Activated T-helper 2 cell treated with anti-CD3 and anti-CD28 coated beads, Interferon-gamma antibody, Interleukin-2, Interleukin-4, amounts not matched to agents 10 μg/mL and 5 μg/mL and 100 μg/mL, durations not matched to agents 14 hours and 24 hours and 36 hours (primary cell): ENCODE measurements at regions of chr11 and their contacts with region 1.

Region 1: GRCh38 chr11:34926101-34926830 is 9.8 kb downstream of the PDHX start:
- DNase-seq: no peak
- H3K4me3 Mint-ChIP-seq: no peak overlapping the region
- H3K27ac Mint-ChIP-seq: no peak overlapping the region
- H3K4me1 Mint-ChIP-seq: peaks cover 15% of the 10 kb centered on the region
- H3K27me3 Mint-ChIP-seq: no peaks in the 10 kb centered on the region

Region 2: GRCh38 chr11:35485656-35486322 is 559.5 kb after region 1 on chr11:
- intact Hi-C with region 1: loop called (anchors 5 kb)
- DNase-seq: peak; percentile 47
- H3K4me3 Mint-ChIP-seq: no peak overlapping the region
- H3K27ac Mint-ChIP-seq: no peak overlapping the region
- H3K4me1 Mint-ChIP-seq: no peaks in the 10 kb centered on the region
- H3K27me3 Mint-ChIP-seq: peaks cover 22% of the 10 kb centered on the region